ENCODE measurements at regions of chr3 and their contacts with region 1.

Region 1: DNA sequence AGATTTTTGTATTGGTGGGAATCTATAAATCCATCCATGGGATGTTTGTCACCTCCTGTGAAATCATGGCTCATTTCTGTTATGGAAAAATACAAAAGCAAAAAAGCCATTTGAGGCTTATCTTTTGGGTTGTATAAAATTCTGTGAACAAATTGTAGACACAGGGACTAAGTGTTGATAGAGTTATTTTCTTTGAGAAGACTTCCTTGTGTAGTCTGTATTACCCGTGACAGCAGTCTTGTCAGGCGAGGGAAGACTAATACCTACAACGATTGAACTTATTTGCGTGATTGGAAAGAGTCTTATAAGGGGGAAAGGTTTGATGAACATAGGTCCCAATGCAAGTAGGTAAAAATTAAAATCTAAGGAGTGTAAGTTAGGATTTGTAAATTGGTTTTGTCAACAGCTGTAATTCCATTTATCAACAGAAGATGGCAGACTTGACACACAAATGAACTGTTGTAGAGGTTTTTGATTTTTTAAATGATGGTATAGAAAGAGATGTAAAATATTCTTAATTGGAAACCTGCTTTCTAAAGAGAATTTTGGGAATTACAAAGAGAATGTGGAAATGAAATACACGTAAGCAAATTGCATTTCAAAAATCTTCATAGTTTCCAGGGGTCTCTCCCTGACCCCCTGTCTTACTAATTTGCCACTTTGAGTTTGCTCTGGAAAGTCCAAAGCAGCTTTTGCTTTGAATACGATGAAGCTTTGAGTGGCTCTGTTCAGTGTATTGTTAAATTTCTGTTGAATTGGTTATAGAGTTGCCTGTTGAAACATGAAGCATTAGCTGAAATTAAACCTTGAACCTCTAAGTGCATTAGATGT is 33.2 kb downstream of the SLC25A26 start:
- DNase-seq: no peak
- H3K4me3 ChIP-seq: no peak overlapping the region
- H3K27ac ChIP-seq: no peak overlapping the region
- H3K4me1 ChIP-seq: no peaks in the 10 kb centered on the region
- H3K27me3 ChIP-seq: no peaks in the 10 kb centered on the region
- CTCF ChIP-seq: peak in 2 of 3 experiments; percentile 38 to 54; a peak in 2 of 4 replicates
- EP300 ChIP-seq: no peak
- POLR2A ChIP-seq: no peak
- RAD21 ChIP-seq: peak in 1 of 2 experiments; percentile 74; a peak in 3 of 4 replicates

Region 2: DNA sequence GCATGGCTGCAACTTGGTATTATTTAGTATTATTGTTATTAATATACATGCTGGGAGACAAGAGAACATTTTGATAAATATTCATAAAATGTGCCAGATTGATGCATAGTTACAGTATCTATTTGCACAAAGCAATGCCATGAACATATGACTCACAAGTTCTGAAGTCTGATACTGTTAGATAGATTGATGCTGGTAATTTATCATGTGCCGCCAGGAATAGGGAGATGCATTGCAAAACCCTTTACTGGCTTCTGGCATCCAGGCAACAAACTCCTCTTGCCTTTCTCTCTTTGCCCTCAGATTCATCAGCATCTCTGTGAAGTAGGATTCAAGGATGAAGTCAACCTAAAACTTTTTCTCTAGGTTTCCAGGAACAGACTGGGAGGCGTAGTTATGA is 74.2 kb before region 1 on chr3:
- CTCF ChIA-PET with region 1: no interaction called
- POLR2A ChIA-PET with region 1: no interaction called
- DNase-seq: no peak
- H3K4me3 ChIP-seq: no peak overlapping the region
- H3K27ac ChIP-seq: no peak overlapping the region
- H3K4me1 ChIP-seq: peaks cover 0 to 3% (median 0%) of the 10 kb centered on the region in 4 experiments; a peak in 1 of 7 replicates
- H3K27me3 ChIP-seq: no peaks in the 10 kb centered on the region
- CTCF ChIP-seq: no peak
- EP300 ChIP-seq: no peak
- POLR2A ChIP-seq: no peak
- RAD21 ChIP-seq: no peak

Region 3: DNA sequence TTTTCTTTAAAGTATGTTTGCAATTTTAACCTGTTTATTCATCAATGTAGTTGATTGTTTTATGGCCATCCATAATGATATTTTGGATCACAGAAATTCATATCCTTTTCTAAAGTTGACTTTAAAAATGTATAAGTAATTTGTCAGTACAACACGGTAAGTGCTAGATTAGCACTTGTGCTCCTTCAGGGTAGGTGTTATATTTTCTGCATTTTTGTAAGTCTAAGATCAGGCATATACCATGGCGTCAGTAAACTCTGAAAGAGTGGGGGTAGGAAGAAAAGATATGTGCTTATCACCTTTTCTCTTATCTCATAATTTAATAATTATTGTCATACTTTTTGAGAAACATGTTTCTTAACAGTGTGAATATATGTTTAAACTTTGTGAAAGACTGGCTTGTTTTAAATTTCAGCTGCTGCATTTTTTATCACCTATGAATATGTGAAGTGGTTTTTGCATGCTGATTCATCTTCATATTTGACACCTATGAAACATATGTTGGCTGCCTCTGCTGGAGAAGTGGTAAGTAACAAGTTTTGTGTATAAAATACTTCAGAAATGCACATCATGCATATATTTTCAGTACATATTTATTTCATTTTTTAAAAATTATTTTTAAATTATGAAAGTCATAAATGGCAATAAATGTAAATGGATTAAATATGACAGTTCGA is 11.1 kb before region 1 on chr3:
- CTCF ChIA-PET with region 1: interaction called, 14 read pairs
- POLR2A ChIA-PET with region 1: no interaction called
- DNase-seq: no peak
- H3K4me3 ChIP-seq: no peak overlapping the region
- H3K27ac ChIP-seq: no peak overlapping the region
- H3K4me1 ChIP-seq: peaks cover 0 to under 1% (median 0%) of the 10 kb centered on the region in 4 experiments; a peak in 2 of 7 replicates
- H3K27me3 ChIP-seq: no peaks in the 10 kb centered on the region
- CTCF ChIP-seq: no peak
- EP300 ChIP-seq: no peak
- POLR2A ChIP-seq: no peak
- RAD21 ChIP-seq: no peak

Region 4: DNA sequence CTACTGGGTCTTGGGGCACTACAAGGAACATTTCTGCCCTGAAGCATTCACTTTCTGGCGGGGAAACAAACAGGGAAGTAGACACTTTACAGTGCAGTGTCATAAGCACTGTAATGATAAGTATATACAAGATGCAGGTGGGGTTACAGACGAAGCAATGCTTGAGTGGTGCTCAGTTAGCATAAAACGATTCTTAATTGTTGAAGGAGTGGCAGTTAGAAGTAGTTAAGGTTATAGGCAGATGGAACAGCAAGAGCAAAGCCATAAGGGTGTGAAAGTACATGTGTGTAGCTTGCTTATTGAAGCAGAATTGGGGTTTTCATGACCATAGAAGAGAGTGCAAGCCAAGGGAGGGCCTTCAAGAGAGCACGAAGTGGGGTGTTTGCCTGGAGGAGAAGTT is 13.0 kb after region 1 on chr3:
- CTCF ChIA-PET with region 1: interaction called, 14 read pairs
- POLR2A ChIA-PET with region 1: no interaction called
- DNase-seq: no peak
- H3K4me3 ChIP-seq: no peak overlapping the region
- H3K27ac ChIP-seq: no peak overlapping the region
- H3K4me1 ChIP-seq: no peaks in the 10 kb centered on the region
- H3K27me3 ChIP-seq: peaks cover 0 to 1% (median 0%) of the 10 kb centered on the region in 4 experiments; a peak in 1 of 7 replicates
- CTCF ChIP-seq: no peak
- EP300 ChIP-seq: no peak
- POLR2A ChIP-seq: no peak
- RAD21 ChIP-seq: no peak

Region 5: GRCh38 chr3:66276705-66277274 is 22.8 kb after region 1 on chr3:
- CTCF ChIA-PET with region 1: interaction called, 14 read pairs
- POLR2A ChIA-PET with region 1: no interaction called
- DNase-seq: peak; percentile 7 to 60
- H3K4me3 ChIP-seq: no peak overlapping the region
- H3K27ac ChIP-seq: no peak overlapping the region
- H3K4me1 ChIP-seq: peaks cover 0 to 3% (median 2%) of the 10 kb centered on the region in 4 experiments; a peak in 2 of 7 replicates
- H3K27me3 ChIP-seq: no peaks in the 10 kb centered on the region
- CTCF ChIP-seq: peak in 2 of 3 experiments; percentile 54 to 72; a peak in 3 of 4 replicates
- EP300 ChIP-seq: no peak
- POLR2A ChIP-seq: no peak
- RAD21 ChIP-seq: peak; percentile 87

Region 6: GRCh38 chr3:66372681-66373350 is 118.8 kb after region 1 on chr3:
- CTCF ChIA-PET with region 1: interaction called, 90 read pairs
- POLR2A ChIA-PET with region 1: interaction called, 5 read pairs
- DNase-seq: peak; percentile 51 to 68
- H3K4me3 ChIP-seq: no peak overlapping the region
- H3K27ac ChIP-seq: no peak overlapping the region
- H3K4me1 ChIP-seq: no peaks in the 10 kb centered on the region
- H3K27me3 ChIP-seq: no peaks in the 10 kb centered on the region
- CTCF ChIP-seq: peak; percentile 76 to 96 (median 87)
- EP300 ChIP-seq: no peak
- POLR2A ChIP-seq: peak in 1 of 2 experiments; percentile 34; a peak in 1 of 3 replicates
- RAD21 ChIP-seq: peak; percentile 95 to 99

Region 7: GRCh38 chr3:66378256-66378823 is 124.3 kb after region 1 on chr3:
- CTCF ChIA-PET with region 1: interaction called, 90 read pairs
- POLR2A ChIA-PET with region 1: no interaction called
- DNase-seq: peak in 1 of 2 experiments; percentile 15
- H3K4me3 ChIP-seq: no peak overlapping the region
- H3K27ac ChIP-seq: no peak overlapping the region
- H3K4me1 ChIP-seq: no peaks in the 10 kb centered on the region
- H3K27me3 ChIP-seq: no peaks in the 10 kb centered on the region
- CTCF ChIP-seq: peak; percentile 48 to 66 (median 53)
- EP300 ChIP-seq: no peak
- POLR2A ChIP-seq: peak in 1 of 2 experiments; percentile 32; a peak in 1 of 3 replicates
- RAD21 ChIP-seq: peak; percentile 38

Region 8: GRCh38 chr3:66394019-66394752 is 140.2 kb after region 1 on chr3:
- CTCF ChIA-PET with region 1: interaction called, 11 read pairs
- POLR2A ChIA-PET with region 1: no interaction called
- DNase-seq: no peak
- H3K4me3 ChIP-seq: no peak overlapping the region
- H3K27ac ChIP-seq: no peak overlapping the region
- H3K4me1 ChIP-seq: no peaks in the 10 kb centered on the region; a peak in 1 of 7 replicates
- H3K27me3 ChIP-seq: no peaks in the 10 kb centered on the region
- CTCF ChIP-seq: no peak
- EP300 ChIP-seq: no peak
- POLR2A ChIP-seq: no peak; a peak in 1 of 3 replicates
- RAD21 ChIP-seq: no peak